Naive thymus-derived CD4-positive, alpha-beta T cell (primary cell): ENCODE measurements at regions of chr21 and their contacts with region 1.

Region 1: DNA sequence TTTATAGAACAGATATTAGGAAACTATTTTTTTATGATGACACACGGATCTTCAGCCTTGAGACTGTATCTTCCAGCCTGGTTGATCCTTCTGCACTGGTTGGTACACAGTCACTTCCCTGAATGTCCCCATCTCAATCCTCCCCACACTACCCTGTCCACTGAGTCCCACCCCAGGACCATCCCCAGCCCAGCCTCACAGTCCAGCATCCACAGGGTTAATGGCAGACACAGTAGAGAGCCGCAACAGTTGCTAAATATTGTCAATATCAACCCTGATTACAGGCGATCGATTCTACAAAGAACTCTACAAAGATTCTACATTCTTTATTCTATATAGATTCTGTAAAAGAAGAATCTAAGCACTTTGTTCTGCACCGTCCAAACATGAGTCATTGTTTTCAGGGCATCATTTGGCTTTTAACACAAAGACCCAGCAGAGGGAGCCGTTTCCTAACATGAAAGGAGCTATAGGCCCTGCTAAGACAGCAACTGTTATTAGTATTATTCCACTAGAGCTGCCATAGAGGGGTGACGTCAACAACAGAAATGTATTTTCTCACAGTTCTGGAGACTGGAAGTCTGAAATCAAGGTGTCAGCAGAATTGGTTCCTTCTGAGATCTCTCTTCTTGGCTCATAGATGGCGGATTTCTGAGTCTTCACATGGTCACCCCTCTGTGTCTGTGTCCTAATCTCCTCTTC is 30.1 kb upstream of the IFNAR2 start:
- DNase-seq: peak; percentile 31 to 88 (median 81)
- ATAC-seq: peak; percentile 91
- H3K4me3 ChIP-seq: no peak overlapping the region
- H3K4me3 Mint-ChIP-seq: no peak overlapping the region
- H3K27ac ChIP-seq: no peak overlapping the region
- H3K27ac Mint-ChIP-seq: peak overlapping the region in 7 of 9 donors; percentile 22 to 87 (median 52)
- H3K4me1 ChIP-seq: peaks cover under 1 to 9% of the 10 kb centered on the region in 2 donors
- H3K4me1 Mint-ChIP-seq: peaks cover 24 to 53% (median 42%) of the 10 kb centered on the region in 7 donors
- H3K27me3 ChIP-seq: no peaks in the 10 kb centered on the region
- H3K27me3 Mint-ChIP-seq: peaks cover 0 to 31% (median 0%) of the 10 kb centered on the region in 5 donors

Region 2: DNA sequence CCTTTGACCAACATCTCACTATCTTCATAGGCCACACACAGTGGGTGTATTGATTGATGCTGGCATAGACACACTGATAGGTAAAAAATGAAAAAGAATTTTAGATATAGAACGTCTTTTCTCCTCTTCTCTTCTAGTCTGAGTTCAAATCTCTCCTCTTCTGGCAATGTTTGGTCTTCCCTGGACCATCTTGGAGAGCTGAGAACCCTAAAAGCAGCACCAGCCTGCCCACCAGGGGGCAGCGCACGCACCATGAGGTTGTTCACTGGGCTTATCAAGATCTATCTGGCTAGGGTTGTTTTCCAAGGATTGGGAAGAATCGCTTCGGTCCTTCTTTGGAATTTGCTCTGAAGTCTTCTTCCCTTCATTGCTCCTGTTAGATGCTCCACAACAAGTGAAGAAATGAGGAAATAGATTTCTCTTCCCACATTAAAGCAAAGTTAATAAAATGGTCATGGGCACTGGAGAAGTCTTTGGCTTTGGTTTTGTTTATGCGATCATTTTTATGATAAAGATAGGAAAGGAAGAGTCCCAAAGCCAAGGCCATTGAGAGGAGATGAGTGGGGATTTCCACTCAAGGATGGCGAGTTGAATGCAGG is 277.9 kb before region 1 on chr21:
- CTCF ChIA-PET with region 1: interaction called, 6 read pairs
- POLR2A ChIA-PET with region 1: no interaction called
- intact Hi-C with region 1: loop called in 1 of 2 experiments (anchors 1 kb)
- DNase-seq: peak in 5 of 9 donors; percentile 27 to 49 (median 35)
- ATAC-seq: no peak
- H3K4me3 ChIP-seq: no peak overlapping the region
- H3K4me3 Mint-ChIP-seq: no peak overlapping the region
- H3K27ac ChIP-seq: no peak overlapping the region
- H3K27ac Mint-ChIP-seq: peak overlapping the region in 2 of 9 donors; percentile 22 to 63
- H3K4me1 ChIP-seq: peaks cover 0 to 3% of the 10 kb centered on the region in 2 donors
- H3K4me1 Mint-ChIP-seq: peaks cover 4 to 20% (median 11%) of the 10 kb centered on the region in 7 donors
- H3K27me3 ChIP-seq: no peaks in the 10 kb centered on the region
- H3K27me3 Mint-ChIP-seq: peaks cover 0 to 18% (median 0%) of the 10 kb centered on the region in 5 donors

Region 3: GRCh38 chr21:33127154-33127893 is 72.3 kb before region 1 on chr21:
- CTCF ChIA-PET with region 1: interaction called, 23 read pairs
- POLR2A ChIA-PET with region 1: interaction called, 3 read pairs
- intact Hi-C with region 1: loop called (anchors 1 to 2 kb)
- DNase-seq: peak; percentile 21 to 60 (median 43)
- ATAC-seq: peak; percentile 87
- H3K4me3 ChIP-seq: peak overlapping the region; percentile 60
- H3K4me3 Mint-ChIP-seq: peak overlapping the region; percentile 52 to 86 (median 78)
- H3K27ac ChIP-seq: no peak overlapping the region
- H3K27ac Mint-ChIP-seq: peak overlapping the region in 5 of 9 donors; percentile 26 to 60 (median 50)
- H3K4me1 ChIP-seq: no peaks in the 10 kb centered on the region
- H3K4me1 Mint-ChIP-seq: peaks cover 0 to 13% (median 6%) of the 10 kb centered on the region in 7 donors
- H3K27me3 ChIP-seq: no peaks in the 10 kb centered on the region
- H3K27me3 Mint-ChIP-seq: peaks cover 10 to 31% (median 27%) of the 10 kb centered on the region in 5 donors

Region 4: GRCh38 chr21:33238565-33239255 is 39.0 kb after region 1 on chr21:
- CTCF ChIA-PET with region 1: interaction called, 5 read pairs
- POLR2A ChIA-PET with region 1: interaction called, 4 read pairs
- intact Hi-C with region 1: loop called in 1 of 2 experiments (anchors 1 kb)
- DNase-seq: peak in 2 of 9 donors; percentile 13 to 39
- ATAC-seq: peak; percentile 73
- H3K4me3 ChIP-seq: peak overlapping the region; percentile 26
- H3K4me3 Mint-ChIP-seq: peak overlapping the region in 9 of 10 donors; percentile 46 to 84 (median 70)
- H3K27ac ChIP-seq: peak overlapping the region; percentile 60
- H3K27ac Mint-ChIP-seq: peak overlapping the region; percentile 43 to 96 (median 90)
- H3K4me1 ChIP-seq: peaks cover 65 to 81% of the 10 kb centered on the region in 2 donors
- H3K4me1 Mint-ChIP-seq: peaks cover 63 to 92% (median 85%) of the 10 kb centered on the region in 7 donors
- H3K27me3 ChIP-seq: no peaks in the 10 kb centered on the region
- H3K27me3 Mint-ChIP-seq: no peaks in the 10 kb centered on the region

Region 5: DNA sequence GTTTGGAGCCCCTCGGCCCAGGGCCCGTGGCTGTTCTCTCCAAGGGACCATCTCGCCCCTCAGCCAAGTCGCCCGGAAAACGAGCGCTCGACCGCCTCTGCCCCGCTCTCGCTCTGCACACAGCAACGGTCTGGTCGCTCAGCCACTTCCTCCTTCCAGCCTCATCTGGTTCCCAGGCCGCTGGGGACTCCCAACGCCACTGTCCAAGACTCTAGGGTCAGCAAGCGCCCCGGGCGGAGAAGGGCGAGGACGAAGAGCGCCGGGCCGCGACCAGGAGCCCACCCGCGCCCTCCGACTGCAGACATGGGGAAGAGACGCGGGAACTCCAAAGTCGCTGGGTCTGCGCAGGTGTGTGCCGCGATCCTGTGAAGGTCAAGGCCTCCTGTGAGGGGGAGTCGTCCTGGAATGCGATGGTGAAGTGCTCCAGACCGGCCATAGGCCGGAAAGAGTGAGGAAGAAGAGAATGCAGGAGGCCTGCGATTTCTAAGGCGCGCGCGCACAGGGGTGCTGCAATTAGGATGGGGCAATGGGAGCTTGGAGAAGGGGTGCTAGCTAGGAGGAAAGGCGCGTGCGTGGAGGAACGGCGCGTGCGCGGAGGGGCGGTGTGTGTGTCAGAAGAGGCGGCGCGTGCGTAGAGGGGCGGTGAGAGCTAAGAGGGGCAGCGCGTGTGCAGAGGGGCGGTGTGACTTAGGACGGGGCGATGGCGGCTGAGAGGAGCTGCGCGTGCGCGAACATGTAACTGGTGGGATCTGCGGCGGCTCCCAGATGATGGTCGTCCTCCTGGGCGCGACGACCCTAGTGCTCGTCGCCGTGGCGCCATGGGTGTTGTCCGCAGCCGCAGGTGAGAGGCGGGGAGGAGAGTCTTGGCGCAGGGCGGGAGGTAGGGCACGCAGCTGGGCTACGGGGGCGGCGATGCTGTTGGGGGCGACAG is 124.9 kb after region 1 on chr21 and contains the start of gene IFNAR1:
- CTCF ChIA-PET with region 1: interaction called, 7 read pairs
- POLR2A ChIA-PET with region 1: interaction called, 6 read pairs
- intact Hi-C with region 1: loop called in 1 of 2 experiments (anchors 1 kb)
- DNase-seq: peak; percentile 94 to 100 (median 98)
- ATAC-seq: peak; percentile 94
- H3K4me3 ChIP-seq: peak within 1 kb of the TSS; percentile 87
- H3K4me3 Mint-ChIP-seq: no peak within 1 kb of the TSS
- H3K27ac ChIP-seq: peak within 1 kb of the TSS; percentile 94
- H3K27ac Mint-ChIP-seq: no peak within 1 kb of the TSS
- H3K4me1 ChIP-seq: peaks cover 21 to 23% of the 10 kb centered on the region in 2 donors
- H3K4me1 Mint-ChIP-seq: peaks cover 0 to 33% (median 26%) of the 10 kb centered on the region in 7 donors
- H3K27me3 ChIP-seq: no peaks in the 10 kb centered on the region
- H3K27me3 Mint-ChIP-seq: peaks cover 0 to 2% (median 0%) of the 10 kb centered on the region in 5 donors
- total RNA-seq, gene IFNAR1: 24.7 to 60.8 (median 40.0) TPM

Region 6: DNA sequence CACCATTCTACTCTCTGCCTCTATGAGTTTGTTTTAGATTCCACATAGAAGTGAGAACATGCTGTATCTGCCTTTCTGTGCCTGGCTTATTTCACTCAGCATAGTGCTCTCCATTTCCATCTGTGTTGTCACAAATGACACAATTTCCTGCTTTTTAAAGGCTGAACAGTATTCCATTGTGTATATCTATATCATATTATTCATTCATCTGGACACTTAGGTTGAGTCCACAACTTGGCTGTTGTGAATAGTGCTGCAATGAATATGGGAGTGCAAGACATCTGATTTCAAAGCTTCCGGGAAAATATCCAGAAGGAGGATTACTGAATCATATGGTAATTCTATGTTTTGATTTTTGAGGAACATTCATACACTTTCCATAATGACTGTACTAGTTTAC is 408.9 kb after region 1 on chr21:
- CTCF ChIA-PET with region 1: interaction called, 4 read pairs
- POLR2A ChIA-PET with region 1: no interaction called
- intact Hi-C with region 1: loop called (anchors 1 to 5 kb)
- DNase-seq: no peak
- ATAC-seq: no peak
- H3K4me3 ChIP-seq: no peak overlapping the region
- H3K4me3 Mint-ChIP-seq: no peak overlapping the region
- H3K27ac ChIP-seq: no peak overlapping the region
- H3K27ac Mint-ChIP-seq: peak overlapping the region in 1 of 9 donors; percentile 7
- H3K4me1 ChIP-seq: no peaks in the 10 kb centered on the region
- H3K4me1 Mint-ChIP-seq: peaks cover 0 to 5% (median 4%) of the 10 kb centered on the region in 7 donors
- H3K27me3 ChIP-seq: no peaks in the 10 kb centered on the region
- H3K27me3 Mint-ChIP-seq: no peaks in the 10 kb centered on the region

Region 7: DNA sequence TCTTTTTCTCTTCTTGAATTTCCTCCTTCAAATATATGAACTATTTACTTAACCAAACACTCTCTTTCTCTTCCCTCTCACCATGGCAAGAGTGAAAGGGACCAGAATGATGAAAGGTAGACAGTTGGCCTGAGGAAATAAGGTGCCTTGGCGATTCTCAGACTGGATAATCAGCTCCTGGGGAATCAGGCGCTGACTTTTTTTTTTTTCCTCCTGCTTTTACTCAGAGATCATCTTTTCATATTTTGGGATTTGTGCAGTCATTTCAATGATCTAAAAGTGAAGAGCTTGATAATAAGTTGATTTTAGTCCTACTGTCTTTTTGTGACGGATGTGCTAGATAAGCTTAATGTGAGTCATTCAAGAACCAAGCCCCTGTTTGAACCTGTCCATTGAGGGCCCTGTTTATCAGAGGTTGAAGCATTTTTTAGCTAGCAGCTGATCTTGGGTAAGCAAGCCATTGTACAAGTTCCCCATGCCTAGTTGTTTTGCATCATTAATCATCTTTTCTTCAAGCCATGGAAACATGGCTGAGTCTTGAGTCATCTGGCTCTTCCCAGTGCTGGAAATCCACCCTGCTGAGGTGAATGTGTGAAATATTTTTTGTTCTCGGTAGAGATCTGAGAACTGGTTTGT is 483.4 kb after region 1 on chr21:
- CTCF ChIA-PET with region 1: no interaction called
- POLR2A ChIA-PET with region 1: no interaction called
- intact Hi-C with region 1: no loop called
- DNase-seq: no peak
- ATAC-seq: no peak
- H3K4me3 ChIP-seq: no peak overlapping the region
- H3K4me3 Mint-ChIP-seq: no peak overlapping the region
- H3K27ac ChIP-seq: no peak overlapping the region
- H3K27ac Mint-ChIP-seq: no peak overlapping the region
- H3K4me1 ChIP-seq: no peaks in the 10 kb centered on the region
- H3K4me1 Mint-ChIP-seq: no peaks in the 10 kb centered on the region
- H3K27me3 ChIP-seq: no peaks in the 10 kb centered on the region
- H3K27me3 Mint-ChIP-seq: peaks cover 0 to 23% (median 2%) of the 10 kb centered on the region in 5 donors